Panc1 (cell line): ENCODE measurements at regions of chr3 and their contacts with region 1.

Region 1: GRCh38 chr3:57100046-57100695 is 39.7 kb downstream of the SPATA12 start:
- DNase-seq: peak; percentile 53
- ATAC-seq: peak; percentile 94
- H3K4me3 ChIP-seq: no peak overlapping the region
- H3K27ac ChIP-seq: no peak overlapping the region
- H3K4me1 ChIP-seq: no peaks in the 10 kb centered on the region
- H3K27me3 ChIP-seq: no peaks in the 10 kb centered on the region
- CTCF ChIP-seq: peak; percentile 86

Region 2: DNA sequence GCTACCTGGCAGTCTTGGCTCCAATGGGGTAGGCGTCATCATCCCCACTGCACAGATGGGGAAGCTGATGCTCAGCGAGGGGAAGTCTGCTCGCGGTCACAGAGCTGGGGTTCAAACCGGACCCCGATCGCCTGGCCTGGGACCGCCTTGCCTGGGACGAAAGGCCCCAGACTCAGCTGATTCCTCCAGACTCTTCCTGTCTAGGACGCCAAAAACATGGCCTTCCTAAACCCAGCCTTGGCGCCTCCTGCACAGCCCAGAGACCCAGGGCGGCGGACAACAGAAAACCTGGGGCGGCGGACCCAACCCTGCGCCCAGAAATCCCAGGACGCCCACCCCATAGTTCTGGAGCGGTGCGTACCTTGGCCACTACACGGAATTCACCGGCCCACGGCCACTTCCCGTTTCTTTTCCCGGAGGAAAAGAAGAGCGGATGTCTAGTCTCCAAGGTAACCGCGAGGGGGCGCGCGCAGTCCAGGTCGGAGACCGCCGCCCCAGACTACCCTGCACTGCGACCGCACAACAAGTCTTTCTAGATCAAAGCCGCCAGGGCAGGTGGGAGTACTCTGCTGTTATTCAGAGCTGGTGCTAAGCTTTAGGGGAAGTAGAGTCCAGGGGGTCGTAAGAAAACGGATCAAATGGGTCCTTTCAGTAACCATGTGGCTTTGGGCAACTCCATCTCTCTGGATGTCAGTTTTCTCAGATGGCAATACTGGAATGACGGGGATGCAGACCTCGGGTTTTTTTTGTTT is 69.9 kb after region 1 on chr3:
- CTCF ChIA-PET with region 1: no interaction called
- POLR2A ChIA-PET with region 1: no interaction called
- in situ Hi-C with region 1: no loop called
- intact Hi-C with region 1: loop called (anchors 5 kb)
- DNase-seq: peak; percentile 17
- ATAC-seq: peak; percentile 92
- H3K4me3 ChIP-seq: peak overlapping the region; percentile 41 to 60
- H3K27ac ChIP-seq: peak overlapping the region; percentile 46
- H3K4me1 ChIP-seq: peaks cover 2% of the 10 kb centered on the region; the same call in 1 of the 2 replicates
- H3K27me3 ChIP-seq: no peaks in the 10 kb centered on the region
- CTCF ChIP-seq: peak; percentile 90

Region 3: DNA sequence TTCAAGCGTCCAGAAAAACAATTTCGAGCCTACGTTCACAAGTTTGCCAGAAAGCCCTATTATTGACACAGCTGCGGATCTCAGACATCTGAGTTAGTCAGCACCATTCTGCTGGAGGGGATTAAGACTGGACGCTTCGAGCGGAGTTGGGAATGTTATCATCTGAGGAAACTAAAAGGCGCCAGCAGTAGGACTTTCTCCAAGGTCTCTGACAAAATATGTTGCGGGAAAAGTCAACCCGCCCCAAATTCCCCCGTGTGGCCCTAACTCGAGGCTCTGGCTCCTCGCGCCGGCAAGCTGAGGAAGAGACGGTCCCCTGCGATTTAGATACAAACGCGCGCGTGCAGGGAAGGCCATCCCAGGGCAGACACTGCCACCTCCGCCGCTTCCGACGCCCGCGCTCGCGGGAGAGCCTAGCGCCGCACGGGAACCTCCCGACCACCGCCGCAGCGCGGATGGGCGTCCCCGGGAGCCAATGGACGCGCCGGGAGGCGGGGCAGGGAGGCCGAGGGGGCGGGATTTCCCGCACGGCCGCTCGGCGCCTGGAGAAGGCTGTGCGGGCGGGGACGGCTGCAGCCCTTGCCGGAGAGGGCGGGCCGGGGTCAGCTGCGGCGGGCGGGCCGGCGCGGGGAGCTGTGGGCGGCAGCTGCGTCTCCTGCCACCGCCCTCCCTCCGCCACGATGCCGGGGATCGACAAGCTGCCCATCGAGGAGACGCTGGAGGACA is 127.2 kb after region 1 on chr3 and contains the start of gene APPL1:
- CTCF ChIA-PET with region 1: no interaction called
- POLR2A ChIA-PET with region 1: no interaction called
- in situ Hi-C with region 1: no loop called
- intact Hi-C with region 1: loop called (anchors 10 kb)
- DNase-seq: peak; percentile 39
- ATAC-seq: peak; percentile 98
- H3K4me3 ChIP-seq: peak within 1 kb of the TSS; percentile 86 to 87
- H3K27ac ChIP-seq: peak within 1 kb of the TSS; percentile 95
- H3K4me1 ChIP-seq: peaks cover 19% of the 10 kb centered on the region
- H3K27me3 ChIP-seq: no peaks in the 10 kb centered on the region
- CTCF ChIP-seq: no peak
- total RNA-seq, gene APPL1: 36.3 TPM

Region 4: DNA sequence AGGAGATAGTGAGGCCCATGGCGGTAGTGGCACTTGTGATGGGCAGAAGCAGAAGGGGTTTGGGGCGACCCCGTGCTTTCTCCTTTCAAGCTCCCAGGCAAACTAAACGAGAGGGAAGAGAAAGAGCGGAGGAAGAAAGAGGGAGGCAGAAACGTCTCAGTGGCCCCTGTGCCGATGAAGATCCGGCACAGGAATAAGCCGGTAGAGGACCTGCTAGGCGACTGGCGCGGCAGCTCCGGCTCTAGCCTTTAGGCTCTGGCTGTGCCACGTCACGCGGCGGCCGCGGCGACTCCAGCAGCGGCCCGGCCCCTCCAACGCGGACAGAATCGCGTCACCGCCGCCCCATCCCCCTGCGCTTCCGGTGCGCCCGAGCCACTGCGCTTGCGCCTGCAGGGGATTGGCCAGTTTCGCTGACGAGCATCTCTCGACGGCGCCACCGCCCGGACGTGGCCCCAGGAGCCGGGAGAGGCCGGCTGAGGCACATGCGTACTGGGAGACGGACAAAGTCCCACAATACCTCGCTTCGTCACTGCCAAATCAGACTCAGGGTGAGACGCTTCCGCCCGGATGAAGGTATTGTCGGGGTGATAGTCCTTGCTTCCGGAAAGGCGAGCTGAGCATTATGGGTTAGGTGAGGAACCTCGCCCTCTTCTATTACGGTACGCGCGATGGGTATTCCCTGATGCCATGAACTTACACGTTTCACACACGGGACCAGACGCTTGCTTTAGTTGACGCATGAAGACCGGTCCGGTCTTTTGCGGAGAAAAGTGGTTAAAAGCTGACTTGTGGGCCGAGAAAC is 497.2 kb after region 1 on chr3 and contains the start of gene ARF4:
- CTCF ChIA-PET with region 1: no interaction called
- POLR2A ChIA-PET with region 1: no interaction called
- in situ Hi-C with region 1: no loop called
- intact Hi-C with region 1: no loop called
- DNase-seq: peak; percentile 94
- ATAC-seq: peak; percentile 96
- H3K4me3 ChIP-seq: peak within 1 kb of the TSS; percentile 94 to 96
- H3K27ac ChIP-seq: peak within 1 kb of the TSS; percentile 97
- H3K4me1 ChIP-seq: peaks cover 11% of the 10 kb centered on the region
- H3K27me3 ChIP-seq: no peaks in the 10 kb centered on the region
- CTCF ChIP-seq: no peak
- total RNA-seq, gene ARF4: 126 TPM